ENCODE measurements at regions of chr1 and their contacts with region 1.

Region 1: GRCh38 chr1:221829327-221830015 is 87.6 kb upstream of the DUSP10 start:
- DNase-seq: peak; percentile 51 to 75
- ATAC-seq: peak; percentile 80 to 92 (median 89)
- H3K4me3 ChIP-seq: no peak overlapping the region
- H3K4me3 Mint-ChIP-seq: peak overlapping the region; percentile 78
- H3K27ac ChIP-seq: peak overlapping the region; percentile 94
- H3K27ac Mint-ChIP-seq: peak overlapping the region; percentile 89 to 92
- H3K4me1 ChIP-seq: peaks cover 37% of the 10 kb centered on the region
- H3K4me1 Mint-ChIP-seq: peaks cover 83 to 84% of the 10 kb centered on the region in 2 donors
- H3K27me3 ChIP-seq: no peaks in the 10 kb centered on the region
- H3K27me3 Mint-ChIP-seq: no peaks in the 10 kb centered on the region
- CTCF ChIP-seq: no peak

Region 2: DNA sequence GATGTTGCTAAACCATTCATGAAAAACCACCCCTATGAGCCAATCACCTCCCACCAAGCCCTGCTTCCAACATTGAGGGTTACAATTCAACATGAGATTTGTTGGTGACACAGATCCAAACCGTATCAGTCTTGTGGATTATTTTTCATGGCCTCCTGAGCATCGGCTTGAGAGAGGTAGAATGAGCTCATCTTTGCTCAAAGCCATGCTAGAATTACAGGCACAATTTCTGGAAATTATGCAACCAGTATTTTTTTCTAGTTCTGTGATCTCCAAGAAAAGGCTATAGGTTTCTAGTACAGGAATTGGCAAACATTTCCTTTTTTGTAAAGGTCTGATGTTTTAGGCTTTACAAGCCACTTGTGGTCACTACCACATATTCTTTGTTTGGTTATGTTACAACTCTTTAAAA is 306.9 kb before region 1 on chr1:
- intact Hi-C with region 1: loop called (anchors 5 kb)
- DNase-seq: no peak
- ATAC-seq: peak in 1 of 3 donors; percentile 42
- H3K4me3 ChIP-seq: no peak overlapping the region
- H3K4me3 Mint-ChIP-seq: no peak overlapping the region
- H3K27ac ChIP-seq: no peak overlapping the region
- H3K27ac Mint-ChIP-seq: peak overlapping the region; percentile 89 to 94
- H3K4me1 ChIP-seq: peaks cover 19% of the 10 kb centered on the region
- H3K4me1 Mint-ChIP-seq: peaks cover 24 to 25% of the 10 kb centered on the region in 2 donors
- H3K27me3 ChIP-seq: no peaks in the 10 kb centered on the region
- H3K27me3 Mint-ChIP-seq: no peaks in the 10 kb centered on the region
- CTCF ChIP-seq: no peak

Region 3: DNA sequence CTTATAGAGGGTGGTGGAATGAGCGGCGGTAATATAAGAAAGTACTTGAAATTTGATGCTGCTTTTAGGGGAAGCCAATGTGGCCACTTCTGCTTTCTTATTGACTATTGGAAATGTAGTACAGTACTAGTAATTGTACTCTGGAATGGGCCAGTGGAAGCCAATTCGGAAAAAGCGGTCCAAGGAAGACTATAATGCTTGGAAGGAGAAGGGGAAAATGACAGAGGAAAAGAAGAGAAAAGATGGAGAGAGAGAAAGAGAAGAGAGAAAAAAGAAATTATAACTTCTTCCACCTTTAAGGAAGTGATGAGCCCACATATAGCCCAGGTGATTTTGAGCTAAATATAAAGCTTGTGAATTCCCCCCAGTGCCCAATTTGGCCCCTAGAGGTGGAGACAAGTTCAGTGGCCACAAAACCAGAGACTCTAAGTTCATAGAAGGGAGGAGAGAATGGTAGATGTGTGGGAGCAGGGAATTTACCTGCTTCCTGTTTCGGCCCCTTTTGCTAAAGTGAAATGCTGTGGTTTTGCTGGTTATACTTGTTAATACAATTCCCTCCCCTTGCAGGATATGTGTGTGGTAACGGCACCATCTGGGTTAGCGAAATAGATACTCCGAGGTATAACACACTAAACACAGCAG is 51.9 kb before region 1 on chr1:
- intact Hi-C with region 1: loop called (anchors 1 kb)
- DNase-seq: peak; percentile 42 to 88
- ATAC-seq: peak; percentile 63 to 85 (median 81)
- H3K4me3 ChIP-seq: no peak overlapping the region
- H3K4me3 Mint-ChIP-seq: peak overlapping the region; percentile 68
- H3K27ac ChIP-seq: peak overlapping the region; percentile 84
- H3K27ac Mint-ChIP-seq: peak overlapping the region; percentile 90 to 99
- H3K4me1 ChIP-seq: peaks cover 62% of the 10 kb centered on the region
- H3K4me1 Mint-ChIP-seq: peaks cover 67 to 71% of the 10 kb centered on the region in 2 donors
- H3K27me3 ChIP-seq: no peaks in the 10 kb centered on the region
- H3K27me3 Mint-ChIP-seq: no peaks in the 10 kb centered on the region
- CTCF ChIP-seq: no peak

Region 4: DNA sequence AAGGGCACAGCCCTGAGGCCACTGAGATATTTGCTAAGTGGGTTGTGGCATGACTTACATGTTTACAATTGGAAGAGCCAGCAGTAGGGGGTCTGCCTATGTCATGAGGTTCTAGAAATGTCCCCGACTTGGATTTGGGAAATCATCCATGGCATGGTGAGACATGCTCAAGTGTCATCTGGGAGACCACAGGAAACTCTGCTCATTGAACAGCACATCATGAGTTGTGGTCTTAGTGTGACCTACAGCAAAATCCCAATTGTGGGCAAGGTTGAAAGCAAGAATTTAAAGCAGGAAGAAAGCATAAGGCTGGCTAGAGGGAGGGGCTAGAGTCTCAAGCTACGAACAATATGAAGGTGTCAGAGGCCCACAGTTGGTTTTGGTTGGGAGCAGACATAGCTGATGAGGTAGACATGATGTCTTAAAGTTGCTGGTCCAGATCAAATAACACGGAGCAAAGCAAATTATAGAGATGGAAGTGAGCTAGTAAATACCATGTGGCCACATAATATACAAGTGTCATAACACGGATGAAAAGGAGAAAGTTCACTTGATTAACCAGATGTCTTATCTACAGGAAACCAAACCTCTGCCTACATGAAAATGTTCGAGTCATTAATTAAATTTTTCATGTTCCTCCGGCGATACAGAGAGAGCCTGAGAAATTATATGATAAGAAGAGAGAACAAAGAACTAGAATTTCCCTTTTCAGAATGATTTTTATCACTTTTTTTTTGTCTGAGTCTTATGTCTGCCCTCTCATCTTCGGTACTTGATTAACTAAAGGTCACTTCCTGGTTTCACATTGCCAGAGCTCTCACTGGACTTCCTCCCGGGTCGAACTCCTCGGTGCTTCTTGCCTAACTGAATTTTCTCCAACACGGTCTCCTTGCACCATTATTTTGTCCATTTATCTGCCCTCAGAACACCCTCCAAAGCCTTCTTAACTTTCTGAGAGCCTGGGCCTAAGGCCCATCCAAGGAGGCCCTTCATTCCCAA is 20.1 kb before region 1 on chr1:
- intact Hi-C with region 1: loop called (anchors 1 kb)
- DNase-seq: peak in 1 of 2 donors; percentile 45
- ATAC-seq: peak; percentile 73 to 88 (median 88)
- H3K4me3 ChIP-seq: no peak overlapping the region
- H3K4me3 Mint-ChIP-seq: peak overlapping the region; percentile 2
- H3K27ac ChIP-seq: no peak overlapping the region
- H3K27ac Mint-ChIP-seq: peak overlapping the region; percentile 44 to 71
- H3K4me1 ChIP-seq: peaks cover 12% of the 10 kb centered on the region
- H3K4me1 Mint-ChIP-seq: peaks cover 35 to 36% of the 10 kb centered on the region in 2 donors
- H3K27me3 ChIP-seq: no peaks in the 10 kb centered on the region
- H3K27me3 Mint-ChIP-seq: no peaks in the 10 kb centered on the region
- CTCF ChIP-seq: no peak

Region 5: DNA sequence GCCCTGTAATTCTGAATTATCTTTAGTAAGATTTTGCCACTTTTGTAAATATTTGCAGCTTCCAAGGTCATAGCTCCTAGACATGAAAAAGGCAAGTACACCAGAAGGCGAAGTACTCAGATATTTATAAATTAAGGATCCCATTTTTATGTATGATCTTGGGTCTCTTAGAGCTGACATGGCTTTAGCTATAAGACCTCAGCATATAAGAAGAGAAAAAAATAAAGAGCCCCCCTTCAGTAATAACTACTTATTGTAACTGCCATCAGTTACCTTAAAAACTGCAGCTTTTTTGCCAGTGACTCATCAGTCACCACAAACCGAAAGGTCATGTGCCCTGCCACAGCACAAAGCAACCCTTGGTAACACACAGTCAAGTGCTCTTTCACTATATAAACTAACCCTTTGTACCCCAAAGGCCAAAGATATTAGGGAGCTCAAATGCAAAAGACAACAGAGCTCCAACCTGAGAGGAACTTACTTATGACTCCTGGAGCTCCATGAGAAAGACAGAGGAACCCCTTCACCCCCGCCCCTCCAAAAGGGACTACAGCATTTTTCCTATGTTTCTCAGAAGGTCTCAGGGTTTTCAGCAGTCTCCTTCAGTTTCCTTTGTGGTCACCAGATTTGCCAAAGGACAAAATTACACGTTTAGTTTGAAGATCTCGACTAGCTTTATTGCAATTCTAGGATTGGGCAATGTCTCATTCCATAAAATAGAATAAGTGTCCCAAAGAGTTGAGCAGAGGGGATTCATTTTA is 132.2 kb after region 1 on chr1:
- intact Hi-C with region 1: loop called (anchors 1 kb)
- DNase-seq: peak; percentile 46 to 68
- ATAC-seq: peak; percentile 79 to 99 (median 96)
- H3K4me3 ChIP-seq: no peak overlapping the region
- H3K4me3 Mint-ChIP-seq: no peak overlapping the region
- H3K27ac ChIP-seq: no peak overlapping the region
- H3K27ac Mint-ChIP-seq: peak overlapping the region; percentile 52 to 80
- H3K4me1 ChIP-seq: peaks cover 4% of the 10 kb centered on the region
- H3K4me1 Mint-ChIP-seq: peaks cover 14 to 17% of the 10 kb centered on the region in 2 donors
- H3K27me3 ChIP-seq: no peaks in the 10 kb centered on the region
- H3K27me3 Mint-ChIP-seq: no peaks in the 10 kb centered on the region
- CTCF ChIP-seq: no peak

Measured in natural killer cell (primary cell).